HAP-1 (cell line): ENCODE measurements at regions of chr18 and their contacts with region 1.

Region 1: DNA sequence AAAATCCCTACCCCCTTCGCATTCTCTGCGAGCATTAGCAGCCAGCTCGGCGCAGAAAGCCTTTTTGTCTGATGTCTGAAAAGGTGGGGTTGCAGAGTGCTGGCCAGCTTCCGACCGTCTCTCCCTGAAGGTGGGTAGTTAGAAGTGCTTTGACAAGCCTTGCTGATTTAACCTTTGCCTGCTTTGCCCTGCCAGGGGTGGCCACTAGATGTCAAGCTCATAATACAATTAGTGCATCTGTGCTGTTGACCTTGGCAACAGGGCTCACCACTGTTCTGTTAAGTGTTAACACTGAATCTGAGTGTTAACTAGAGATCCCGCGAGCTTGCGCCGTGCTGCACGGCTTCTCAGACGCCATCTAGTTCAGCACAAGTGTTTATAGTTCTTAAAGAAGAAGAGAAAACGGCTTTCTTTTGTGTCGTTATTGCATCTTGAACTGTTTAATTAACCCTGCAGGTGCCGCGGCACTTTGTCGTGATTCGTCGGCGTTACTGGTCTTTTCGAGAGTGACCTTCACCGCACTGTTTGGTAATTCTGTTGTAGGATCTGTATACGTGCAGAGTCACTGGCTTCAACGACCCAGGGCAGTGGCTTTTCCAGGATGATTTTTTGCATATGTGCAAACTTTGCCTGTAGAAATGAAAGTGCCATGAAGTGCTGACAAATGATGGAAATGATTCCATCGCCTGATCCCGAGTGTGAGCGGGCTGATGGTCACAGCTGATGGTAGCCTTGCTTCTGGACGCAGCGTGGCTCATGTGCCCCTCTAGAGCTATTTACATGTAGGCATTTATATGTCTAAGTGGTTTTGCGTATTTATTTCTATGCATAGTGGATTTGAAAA is 5.5 kb downstream of the SALL3 start:
- DNase-seq: peak; percentile 63 to 76
- H3K4me3 ChIP-seq: peak overlapping the region; percentile 18
- H3K4me1 ChIP-seq: peaks cover 63% of the 10 kb centered on the region
- H3K27me3 ChIP-seq: no peaks in the 10 kb centered on the region

Region 2: DNA sequence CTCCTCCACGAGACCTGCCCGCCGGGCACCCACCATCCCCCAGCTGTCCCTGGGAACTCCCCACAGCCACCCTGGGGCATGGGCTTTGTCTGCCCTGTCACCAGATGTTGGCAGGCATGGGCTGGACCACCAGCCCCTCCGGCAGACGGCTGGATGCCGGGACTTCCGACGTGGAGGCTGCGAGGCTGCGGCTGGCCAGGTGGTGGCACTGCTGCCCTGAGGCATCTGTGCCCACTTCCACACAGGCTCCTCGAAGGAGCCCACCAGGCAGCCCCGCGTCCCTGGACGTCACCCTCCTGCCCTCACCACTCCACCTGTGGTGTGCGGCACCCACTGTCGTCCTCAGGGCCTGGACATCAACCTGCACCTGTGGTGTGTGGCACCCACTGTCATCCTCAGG is 325.4 kb before region 1 on chr18:
- in situ Hi-C with region 1: loop called (anchors 10 kb)
- DNase-seq: peak; percentile 21 to 75
- H3K4me3 ChIP-seq: no peak overlapping the region
- H3K4me1 ChIP-seq: no peaks in the 10 kb centered on the region
- H3K27me3 ChIP-seq: no peaks in the 10 kb centered on the region

Region 3: DNA sequence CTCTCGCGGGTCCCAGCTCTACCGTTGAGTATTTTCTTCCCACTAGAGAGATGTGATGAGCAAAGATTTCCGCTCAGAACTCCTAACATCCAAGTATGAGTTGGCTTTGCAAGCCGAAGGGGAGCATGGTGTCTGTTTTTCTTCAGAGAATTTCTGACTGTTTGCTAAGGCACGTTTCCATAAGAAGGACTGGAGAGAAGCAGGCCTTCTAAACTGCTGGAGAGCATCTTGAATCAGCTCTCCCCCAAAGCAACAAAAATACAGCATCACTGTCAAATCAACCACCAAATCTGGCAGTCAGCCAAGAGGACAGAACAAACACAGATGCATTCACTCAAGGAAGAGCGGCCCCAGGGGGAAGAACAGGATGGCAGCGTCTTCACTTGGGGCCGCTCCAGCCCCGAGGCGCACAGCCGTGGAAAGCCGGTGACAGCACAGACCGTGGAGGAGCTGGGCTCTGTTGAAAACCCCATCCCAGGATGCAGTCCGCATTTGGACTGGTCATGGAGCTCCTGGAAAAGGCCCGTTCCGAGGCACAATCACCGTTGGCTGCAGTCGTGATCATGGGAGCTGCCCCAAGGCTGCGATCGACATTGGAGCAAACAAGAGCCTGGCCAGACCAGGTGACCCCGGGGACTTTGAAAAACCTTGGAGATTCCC is 511.9 kb after region 1 on chr18:
- in situ Hi-C with region 1: no loop called
- DNase-seq: no peak
- H3K4me3 ChIP-seq: no peak overlapping the region
- H3K4me1 ChIP-seq: no peaks in the 10 kb centered on the region
- H3K27me3 ChIP-seq: no peaks in the 10 kb centered on the region